Endothelial cell of umbilical vein (primary cell): ENCODE measurements at regions of chr1 and their contacts with region 1.

Region 1: DNA sequence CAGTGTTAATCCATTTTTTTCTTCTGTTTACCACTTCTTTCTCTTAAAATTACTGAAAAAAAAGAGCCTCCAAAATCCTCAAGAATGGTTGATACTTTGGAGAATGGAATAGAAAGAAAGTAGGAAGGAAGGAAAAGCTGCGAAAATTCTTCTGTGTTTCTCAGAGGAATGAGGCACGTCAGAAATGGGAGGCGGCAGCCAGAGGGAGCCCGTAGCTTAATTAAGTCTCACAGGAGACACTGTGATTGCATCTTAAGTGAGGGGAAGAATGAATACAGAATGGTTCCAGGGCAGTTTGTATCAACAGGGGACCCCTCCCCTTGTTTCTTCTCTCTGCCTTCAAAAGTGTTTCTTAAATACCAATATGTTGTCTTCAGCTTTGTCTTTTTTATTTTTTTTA is 1099.5 kb downstream of the PLA2G4A start:
- DNase-seq: peak; percentile 78
- H3K4me3 ChIP-seq: no peak overlapping the region
- H3K27ac ChIP-seq: no peak overlapping the region
- H3K4me1 ChIP-seq: peaks cover 6% of the 10 kb centered on the region
- H3K27me3 ChIP-seq: no peaks in the 10 kb centered on the region
- CTCF ChIP-seq: peak; percentile 52 to 58
- POLR2A ChIP-seq: no peak

Region 2: GRCh38 chr1:187476671-187477070 is 451.6 kb before region 1 on chr1:
- CTCF ChIA-PET with region 1: interaction called, 6 read pairs
- POLR2A ChIA-PET with region 1: no interaction called
- dilution Hi-C with region 1: no loop called
- intact Hi-C with region 1: loop called (anchors 2 kb)
- DNase-seq: peak; percentile 61
- H3K4me3 ChIP-seq: no peak overlapping the region
- H3K27ac ChIP-seq: no peak overlapping the region
- H3K4me1 ChIP-seq: no peaks in the 10 kb centered on the region
- H3K27me3 ChIP-seq: no peaks in the 10 kb centered on the region
- CTCF ChIP-seq: peak; percentile 8 to 19
- POLR2A ChIP-seq: no peak

Region 3: DNA sequence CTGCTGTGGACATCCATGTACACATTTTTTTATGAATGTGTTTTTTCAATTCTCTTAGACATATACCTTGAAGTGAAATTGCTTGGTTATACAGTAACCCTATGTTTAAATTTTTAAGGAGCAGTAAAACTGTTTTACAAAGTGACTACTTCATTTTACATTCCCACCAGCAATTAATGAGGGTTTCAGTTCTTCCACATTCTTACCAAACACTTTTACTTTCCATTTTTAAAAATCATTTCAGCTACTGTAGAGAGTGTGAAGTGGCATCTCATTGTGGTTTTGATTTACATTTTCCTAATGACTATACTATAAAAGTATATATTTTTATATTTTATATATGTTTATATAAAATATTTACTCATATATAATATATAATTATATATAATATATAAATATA is 122.0 kb after region 1 on chr1:
- CTCF ChIA-PET with region 1: no interaction called
- POLR2A ChIA-PET with region 1: no interaction called
- dilution Hi-C with region 1: no loop called
- intact Hi-C with region 1: no loop called
- DNase-seq: no peak
- H3K4me3 ChIP-seq: no peak overlapping the region
- H3K27ac ChIP-seq: no peak overlapping the region
- H3K4me1 ChIP-seq: peaks cover 5% of the 10 kb centered on the region
- H3K27me3 ChIP-seq: no peaks in the 10 kb centered on the region
- CTCF ChIP-seq: no peak
- POLR2A ChIP-seq: no peak

Region 4: DNA sequence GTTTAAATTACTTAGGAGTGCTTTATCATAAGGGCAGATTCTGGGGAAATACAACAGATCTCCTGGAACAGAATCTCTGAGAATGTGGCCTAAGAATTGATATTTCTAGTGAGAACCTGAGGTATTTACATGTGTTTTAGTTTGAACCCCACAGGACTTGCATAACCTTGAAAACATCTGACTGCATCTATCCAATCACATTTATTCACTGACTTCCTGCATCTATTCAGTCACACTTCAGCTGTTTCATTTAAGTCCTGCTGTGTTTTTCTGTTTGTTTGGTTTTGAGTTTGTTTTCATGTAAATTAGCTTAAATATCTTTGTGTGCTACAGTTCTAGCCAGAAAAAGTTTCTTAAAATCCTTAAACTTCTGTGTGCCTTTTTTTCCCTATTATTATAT is 161.2 kb after region 1 on chr1:
- CTCF ChIA-PET with region 1: interaction called, 11 read pairs
- POLR2A ChIA-PET with region 1: no interaction called
- dilution Hi-C with region 1: no loop called
- intact Hi-C with region 1: loop called (anchors 5 kb)
- DNase-seq: peak; percentile 39
- H3K4me3 ChIP-seq: no peak overlapping the region
- H3K27ac ChIP-seq: peak overlapping the region; percentile 38
- H3K4me1 ChIP-seq: peaks cover 16% of the 10 kb centered on the region
- H3K27me3 ChIP-seq: no peaks in the 10 kb centered on the region
- CTCF ChIP-seq: no peak
- POLR2A ChIP-seq: no peak

Region 5: DNA sequence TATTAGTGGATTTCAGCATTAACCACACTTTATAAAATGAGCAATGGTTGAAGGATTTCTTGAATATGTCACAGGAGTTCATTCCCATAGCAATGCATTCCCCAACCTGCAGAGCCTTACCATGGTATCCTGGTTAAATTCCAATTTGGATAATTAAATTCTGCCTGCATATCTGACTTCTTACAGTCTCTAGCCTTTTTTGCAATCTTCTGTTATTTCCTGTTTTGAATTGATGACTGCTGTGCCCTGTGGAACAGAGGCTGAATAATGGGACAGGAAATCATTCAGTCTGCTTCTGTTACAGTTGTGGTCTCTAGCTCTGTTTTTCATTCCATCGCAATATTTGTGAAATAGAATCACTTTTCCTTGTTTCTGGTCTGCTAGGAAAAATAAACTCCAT is 724.4 kb after region 1 on chr1:
- CTCF ChIA-PET with region 1: interaction called, 4 read pairs
- POLR2A ChIA-PET with region 1: no interaction called
- dilution Hi-C with region 1: no loop called
- intact Hi-C with region 1: loop called (anchors 5 kb)
- DNase-seq: peak; percentile 90
- H3K4me3 ChIP-seq: no peak overlapping the region
- H3K27ac ChIP-seq: peak overlapping the region; percentile 55
- H3K4me1 ChIP-seq: peaks cover 18% of the 10 kb centered on the region
- H3K27me3 ChIP-seq: no peaks in the 10 kb centered on the region
- CTCF ChIP-seq: no peak
- POLR2A ChIP-seq: no peak

Region 6: DNA sequence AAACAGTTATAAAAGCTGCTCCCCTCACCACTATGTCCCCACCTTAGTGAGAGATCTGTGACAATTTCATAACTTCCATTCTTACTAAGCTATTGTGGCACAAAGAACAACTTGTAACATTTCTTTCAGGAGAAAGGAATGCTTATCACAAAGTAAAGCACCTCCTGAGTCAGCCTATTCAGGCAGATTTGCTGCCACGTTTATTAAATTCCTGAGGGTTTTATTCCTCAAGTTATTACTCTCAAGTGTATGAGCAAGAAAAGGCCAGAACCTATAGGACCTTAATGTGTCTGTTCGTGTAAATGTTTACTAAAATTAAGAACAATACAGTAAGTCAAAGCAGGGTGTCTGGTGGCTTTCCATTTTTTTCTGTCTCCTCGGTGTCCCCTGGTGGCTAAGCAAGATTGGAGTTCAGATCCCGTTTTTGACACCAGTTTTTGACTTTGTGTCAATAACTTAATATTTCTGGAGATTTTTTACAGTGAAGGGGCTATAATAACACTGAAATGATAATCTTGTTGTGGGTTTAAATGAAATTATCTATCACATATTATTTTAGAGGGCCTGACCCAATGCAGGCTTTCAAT is 1009.8 kb after region 1 on chr1:
- CTCF ChIA-PET with region 1: interaction called, 14 read pairs
- POLR2A ChIA-PET with region 1: no interaction called
- dilution Hi-C with region 1: no loop called
- intact Hi-C with region 1: loop called (anchors 1 kb)
- DNase-seq: peak; percentile 53
- H3K4me3 ChIP-seq: no peak overlapping the region
- H3K27ac ChIP-seq: peak overlapping the region; percentile 23
- H3K4me1 ChIP-seq: no peaks in the 10 kb centered on the region
- H3K27me3 ChIP-seq: no peaks in the 10 kb centered on the region
- CTCF ChIP-seq: peak; percentile 35 to 41
- POLR2A ChIP-seq: no peak